CD4-positive, alpha-beta memory T cell (primary cell): ENCODE measurements at regions of chr1 and their contacts with region 1.

Region 1: GRCh38 chr1:211323156-211324063 is 3.2 kb upstream of the TRAF5 start:
- DNase-seq: peak; percentile 67 to 73 (median 70)
- H3K4me3 ChIP-seq: no peak overlapping the region
- H3K4me3 Mint-ChIP-seq: no peak overlapping the region
- H3K27ac ChIP-seq: no peak overlapping the region
- H3K27ac Mint-ChIP-seq: peak overlapping the region in 3 of 7 donors; percentile 14 to 49 (median 18)
- H3K4me1 ChIP-seq: peaks cover 36% of the 10 kb centered on the region
- H3K4me1 Mint-ChIP-seq: peaks cover 21 to 47% (median 38%) of the 10 kb centered on the region in 4 donors
- H3K27me3 ChIP-seq: no peaks in the 10 kb centered on the region
- H3K27me3 Mint-ChIP-seq: no peaks in the 10 kb centered on the region

Region 2: GRCh38 chr1:211258756-211259637 is 64.4 kb before region 1 on chr1 and contains the start of gene RCOR3:
- CTCF ChIA-PET with region 1: interaction called, 4 read pairs
- POLR2A ChIA-PET with region 1: interaction called, 5 read pairs
- intact Hi-C with region 1: loop called (anchors 2 kb)
- DNase-seq: peak; percentile 87 to 91 (median 89)
- H3K4me3 ChIP-seq: peak within 1 kb of the TSS; percentile 70 to 75
- H3K4me3 Mint-ChIP-seq: peak within 1 kb of the TSS; percentile 87 to 96 (median 91)
- H3K27ac ChIP-seq: peak within 1 kb of the TSS; percentile 77
- H3K27ac Mint-ChIP-seq: peak within 1 kb of the TSS; percentile 89 to 98 (median 92)
- H3K4me1 ChIP-seq: peaks cover 21% of the 10 kb centered on the region
- H3K4me1 Mint-ChIP-seq: peaks cover 10 to 26% (median 18%) of the 10 kb centered on the region in 4 donors
- H3K27me3 ChIP-seq: no peaks in the 10 kb centered on the region
- H3K27me3 Mint-ChIP-seq: no peaks in the 10 kb centered on the region
- total RNA-seq, gene RCOR3: 69.5 to 74.7 TPM

Region 3: GRCh38 chr1:211335522-211336157 is 12.2 kb after region 1 on chr1:
- CTCF ChIA-PET with region 1: interaction called, 250 read pairs
- POLR2A ChIA-PET with region 1: interaction called, 80 read pairs
- intact Hi-C with region 1: loop called (anchors 1 kb)
- DNase-seq: peak; percentile 25 to 50 (median 43)
- H3K4me3 ChIP-seq: peak overlapping the region; percentile 30 to 49
- H3K4me3 Mint-ChIP-seq: peak overlapping the region; percentile 75 to 90 (median 82)
- H3K27ac ChIP-seq: peak overlapping the region; percentile 57
- H3K27ac Mint-ChIP-seq: peak overlapping the region; percentile 88 to 96 (median 92)
- H3K4me1 ChIP-seq: peaks cover 99% of the 10 kb centered on the region
- H3K4me1 Mint-ChIP-seq: peaks cover 74 to 100% (median 88%) of the 10 kb centered on the region in 4 donors
- H3K27me3 ChIP-seq: no peaks in the 10 kb centered on the region
- H3K27me3 Mint-ChIP-seq: no peaks in the 10 kb centered on the region

Region 4: DNA sequence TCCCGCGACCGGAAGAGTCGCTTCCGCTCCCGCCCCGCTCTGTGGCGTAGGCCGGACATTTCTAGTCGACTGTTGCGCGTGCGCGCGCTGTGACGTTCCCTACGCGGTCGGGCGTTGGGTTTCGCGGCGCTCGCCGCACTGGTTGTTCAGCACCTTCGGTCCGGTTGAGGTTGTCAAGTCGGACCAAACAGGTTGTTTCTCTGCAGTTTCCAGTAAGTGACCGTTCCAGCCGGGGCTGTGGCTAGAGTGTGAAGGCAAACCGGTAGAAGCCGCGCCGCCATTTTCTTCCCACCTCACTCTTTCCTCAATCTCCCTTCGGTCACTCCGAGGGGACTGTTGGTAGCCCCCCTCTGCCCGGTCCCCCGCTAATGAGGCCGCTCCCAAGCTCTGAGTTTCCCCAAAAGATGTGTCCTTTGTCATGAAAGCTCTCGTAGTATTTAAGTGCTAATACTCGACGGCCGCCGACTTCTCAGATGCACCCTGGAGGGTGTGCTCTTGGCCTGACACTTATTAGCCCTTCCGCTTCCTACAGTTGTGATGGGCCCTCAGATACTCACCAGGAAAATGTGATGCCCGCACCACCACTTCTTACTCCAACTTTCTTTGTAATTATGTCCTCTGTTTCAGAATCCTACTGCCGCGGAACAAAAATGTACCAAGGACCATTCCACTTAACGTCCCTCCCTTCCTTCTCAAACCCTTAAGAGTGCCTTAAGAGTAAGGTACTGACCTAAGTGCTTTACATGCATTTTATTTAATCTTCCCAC is 59.5 kb after region 1 on chr1:
- CTCF ChIA-PET with region 1: interaction called, 15 read pairs
- POLR2A ChIA-PET with region 1: interaction called, 12 read pairs
- intact Hi-C with region 1: loop called (anchors 1 kb)
- DNase-seq: peak; percentile 63 to 75 (median 64)
- H3K4me3 ChIP-seq: peak overlapping the region; percentile 75 to 84
- H3K4me3 Mint-ChIP-seq: peak overlapping the region; percentile 93 to 97 (median 96)
- H3K27ac ChIP-seq: peak overlapping the region; percentile 82
- H3K27ac Mint-ChIP-seq: peak overlapping the region; percentile 93 to 98 (median 97)
- H3K4me1 ChIP-seq: peaks cover 16% of the 10 kb centered on the region
- H3K4me1 Mint-ChIP-seq: peaks cover 16 to 35% (median 28%) of the 10 kb centered on the region in 4 donors
- H3K27me3 ChIP-seq: no peaks in the 10 kb centered on the region
- H3K27me3 Mint-ChIP-seq: no peaks in the 10 kb centered on the region

Region 5: DNA sequence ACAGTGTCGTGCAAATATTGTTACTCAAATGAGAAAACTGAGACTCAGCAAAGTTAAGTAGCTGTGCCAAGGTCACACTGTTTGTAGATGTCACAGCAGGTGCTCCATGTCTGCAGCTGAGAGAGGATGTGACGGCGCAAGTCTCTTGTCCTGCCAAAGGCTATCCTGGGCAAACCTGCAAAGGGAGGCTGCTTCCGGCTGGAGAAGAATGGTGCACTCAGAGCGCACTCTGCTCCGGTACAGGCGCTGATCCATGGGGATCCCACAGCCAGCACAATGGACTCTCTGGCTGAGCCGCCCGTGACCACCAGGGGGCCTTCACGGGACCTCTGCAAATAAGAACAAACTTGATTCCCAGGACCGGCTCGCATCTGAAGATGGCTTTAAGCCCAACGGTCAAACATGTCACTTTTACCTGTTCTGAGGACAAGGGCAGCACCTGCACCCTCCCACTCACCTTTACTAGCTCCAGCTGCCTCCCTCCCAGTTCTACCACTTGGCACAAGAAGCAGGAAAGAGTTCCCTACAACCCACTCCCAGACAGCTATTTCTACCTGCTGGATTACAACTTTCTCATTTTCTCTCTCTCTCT is 146.6 kb after region 1 on chr1:
- CTCF ChIA-PET with region 1: interaction called, 38 read pairs
- POLR2A ChIA-PET with region 1: interaction called, 5 read pairs
- intact Hi-C with region 1: no loop called
- DNase-seq: peak; percentile 9 to 48 (median 19)
- H3K4me3 ChIP-seq: no peak overlapping the region
- H3K4me3 Mint-ChIP-seq: peak overlapping the region in 1 of 8 donors; percentile 33
- H3K27ac ChIP-seq: no peak overlapping the region
- H3K27ac Mint-ChIP-seq: peak overlapping the region in 1 of 7 donors; percentile 40
- H3K4me1 ChIP-seq: peaks cover 4% of the 10 kb centered on the region
- H3K4me1 Mint-ChIP-seq: peaks cover 5 to 11% (median 10%) of the 10 kb centered on the region in 4 donors
- H3K27me3 ChIP-seq: no peaks in the 10 kb centered on the region
- H3K27me3 Mint-ChIP-seq: peaks cover 1 to 2% of the 10 kb centered on the region in 2 donors

Region 6: GRCh38 chr1:211514030-211514754 is 190.8 kb after region 1 on chr1:
- CTCF ChIA-PET with region 1: interaction called, 53 read pairs
- POLR2A ChIA-PET with region 1: interaction called, 5 read pairs
- intact Hi-C with region 1: loop called (anchors 1 kb)
- DNase-seq: peak; percentile 49 to 69 (median 54)
- H3K4me3 ChIP-seq: no peak overlapping the region
- H3K4me3 Mint-ChIP-seq: peak overlapping the region in 7 of 8 donors; percentile 72 to 89 (median 79)
- H3K27ac ChIP-seq: no peak overlapping the region
- H3K27ac Mint-ChIP-seq: peak overlapping the region in 4 of 7 donors; percentile 60 to 89 (median 66)
- H3K4me1 ChIP-seq: peaks cover 20% of the 10 kb centered on the region
- H3K4me1 Mint-ChIP-seq: peaks cover 10 to 18% (median 15%) of the 10 kb centered on the region in 4 donors
- H3K27me3 ChIP-seq: no peaks in the 10 kb centered on the region
- H3K27me3 Mint-ChIP-seq: no peaks in the 10 kb centered on the region

Region 7: DNA sequence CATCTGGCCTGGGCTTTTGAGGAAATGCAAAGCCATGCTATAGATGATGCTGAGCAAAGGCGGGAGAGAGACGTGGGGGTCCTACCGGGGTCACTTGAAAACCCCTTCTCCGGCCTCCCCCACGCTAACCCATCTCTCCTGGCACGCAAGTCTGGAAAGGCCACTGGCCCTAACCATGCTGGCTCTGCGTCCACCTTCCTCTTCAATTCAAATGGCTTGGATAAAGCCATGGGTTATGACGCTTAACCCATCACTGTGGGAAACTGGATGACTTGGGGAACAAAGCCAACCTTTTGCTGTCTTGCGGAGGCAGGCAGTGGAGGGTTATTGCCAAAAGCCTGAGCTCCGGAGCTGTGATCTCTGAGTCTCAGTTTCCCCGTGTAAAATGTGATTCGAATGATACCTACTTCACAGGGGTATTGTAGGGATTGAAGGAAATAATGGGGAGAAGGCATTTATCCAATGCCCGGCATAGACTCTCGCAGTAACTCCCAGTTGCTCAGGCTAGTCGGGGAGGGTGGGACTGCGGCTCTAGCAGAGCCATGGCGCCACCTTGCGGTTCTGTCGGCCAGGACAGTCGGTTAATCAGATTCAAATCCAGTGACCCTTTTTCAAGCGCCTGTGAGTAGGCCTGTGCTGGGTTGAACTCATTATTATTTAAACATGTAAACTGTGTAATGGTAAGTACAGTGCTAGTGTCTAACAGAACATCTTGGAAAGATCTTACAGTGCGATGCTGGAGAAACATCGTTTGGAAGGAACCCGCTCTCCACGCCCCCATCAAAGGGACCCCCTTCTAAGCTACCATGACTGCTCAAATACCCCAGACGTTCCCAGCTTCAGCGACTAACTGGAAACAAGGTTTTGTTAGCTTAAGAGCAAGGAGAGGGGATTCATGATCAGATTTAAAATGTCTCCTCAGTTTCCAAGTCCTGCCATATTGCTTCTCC is 331.7 kb after region 1 on chr1:
- CTCF ChIA-PET with region 1: interaction called, 4 read pairs
- POLR2A ChIA-PET with region 1: no interaction called
- intact Hi-C with region 1: loop called (anchors 2 kb)
- DNase-seq: peak; percentile 71 to 75 (median 74)
- H3K4me3 ChIP-seq: no peak overlapping the region
- H3K4me3 Mint-ChIP-seq: no peak overlapping the region
- H3K27ac ChIP-seq: no peak overlapping the region
- H3K27ac Mint-ChIP-seq: no peak overlapping the region
- H3K4me1 ChIP-seq: no peaks in the 10 kb centered on the region
- H3K4me1 Mint-ChIP-seq: peaks cover 0 to 2% (median 0%) of the 10 kb centered on the region in 4 donors
- H3K27me3 ChIP-seq: no peaks in the 10 kb centered on the region
- H3K27me3 Mint-ChIP-seq: peaks cover 0 to 2% of the 10 kb centered on the region in 2 donors